ENCODE measurements at regions of chr4 and their contacts with region 1.

Region 1: DNA sequence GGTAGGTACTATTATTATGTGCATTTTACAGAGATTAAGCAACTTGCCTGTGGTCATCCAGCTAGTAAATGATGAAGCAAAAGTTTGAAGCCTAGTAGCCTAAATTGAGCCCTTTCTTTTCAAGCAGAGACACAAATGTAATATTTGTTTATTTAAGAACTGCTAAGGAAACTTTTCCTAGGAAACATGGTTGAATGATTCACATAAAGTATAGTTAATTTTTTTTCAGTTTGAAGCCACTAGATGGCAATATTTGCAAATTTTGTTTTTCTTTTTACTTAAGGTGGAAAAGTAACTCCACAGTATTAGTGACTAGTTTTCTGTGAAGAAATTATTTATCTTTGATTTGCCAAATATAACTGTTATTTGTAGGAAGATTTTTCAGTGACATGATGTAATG is 52.8 kb upstream of the ANKRD17 start:
- DNase-seq: peak in 1 of 5 donors; percentile 0
- H3K4me3 ChIP-seq: no peak overlapping the region
- H3K4me3 Mint-ChIP-seq: no peak overlapping the region
- H3K27ac ChIP-seq: no peak overlapping the region
- H3K27ac Mint-ChIP-seq: no peak overlapping the region
- H3K4me1 ChIP-seq: no peaks in the 10 kb centered on the region
- H3K4me1 Mint-ChIP-seq: no peaks in the 10 kb centered on the region
- H3K27me3 ChIP-seq: no peaks in the 10 kb centered on the region
- H3K27me3 Mint-ChIP-seq: peaks cover 0 to 1% of the 10 kb centered on the region in 2 donors

Region 2: GRCh38 chr4:73446336-73446938 is 135.0 kb after region 1 on chr4:
- CTCF ChIA-PET with region 1: no interaction called
- POLR2A ChIA-PET with region 1: no interaction called
- intact Hi-C with region 1: loop called (anchors 5 kb)
- DNase-seq: peak in 4 of 5 donors; percentile 6 to 32 (median 14)
- H3K4me3 ChIP-seq: no peak overlapping the region
- H3K4me3 Mint-ChIP-seq: no peak overlapping the region
- H3K27ac ChIP-seq: no peak overlapping the region
- H3K27ac Mint-ChIP-seq: no peak overlapping the region
- H3K4me1 ChIP-seq: no peaks in the 10 kb centered on the region
- H3K4me1 Mint-ChIP-seq: no peaks in the 10 kb centered on the region
- H3K27me3 ChIP-seq: no peaks in the 10 kb centered on the region
- H3K27me3 Mint-ChIP-seq: peaks cover 6 to 11% of the 10 kb centered on the region in 2 donors

Region 3: GRCh38 chr4:74133786-74134499 is 822.5 kb after region 1 on chr4:
- CTCF ChIA-PET with region 1: interaction called, 4 read pairs
- POLR2A ChIA-PET with region 1: no interaction called
- intact Hi-C with region 1: loop called (anchors 5 kb)
- DNase-seq: peak in 4 of 5 donors; percentile 12 to 24 (median 22)
- H3K4me3 ChIP-seq: no peak overlapping the region
- H3K4me3 Mint-ChIP-seq: no peak overlapping the region
- H3K27ac ChIP-seq: no peak overlapping the region
- H3K27ac Mint-ChIP-seq: no peak overlapping the region
- H3K4me1 ChIP-seq: no peaks in the 10 kb centered on the region
- H3K4me1 Mint-ChIP-seq: no peaks in the 10 kb centered on the region
- H3K27me3 ChIP-seq: no peaks in the 10 kb centered on the region
- H3K27me3 Mint-ChIP-seq: peaks cover 14 to 15% of the 10 kb centered on the region in 2 donors